Activated CD8-positive, alpha-beta memory T cell treated with anti-CD3 and anti-CD28 coated beads, Interleukin-2, amount 10 ng/mL, durations not matched to agents 7 days and 5 days (primary cell): ENCODE measurements at regions of chr12 and their contacts with region 1.

Region 1: GRCh38 chr12:104108755-104109445 is 29.1 kb downstream of the NFYB start:
- DNase-seq: peak; percentile 91
- ATAC-seq: peak; percentile 100
- H3K4me3 Mint-ChIP-seq: no peak overlapping the region
- H3K27ac Mint-ChIP-seq: peak overlapping the region; percentile 42
- H3K4me1 Mint-ChIP-seq: peaks cover 9% of the 10 kb centered on the region
- H3K27me3 Mint-ChIP-seq: no peaks in the 10 kb centered on the region

Region 2: GRCh38 chr12:103884316-103884715 is 224.6 kb before region 1 on chr12:
- CTCF ChIA-PET with region 1: interaction called, 11 read pairs
- DNase-seq: peak; percentile 60
- ATAC-seq: no peak
- H3K4me3 Mint-ChIP-seq: no peak overlapping the region
- H3K27ac Mint-ChIP-seq: no peak overlapping the region
- H3K4me1 Mint-ChIP-seq: peaks cover 22% of the 10 kb centered on the region
- H3K27me3 Mint-ChIP-seq: no peaks in the 10 kb centered on the region

Region 3: DNA sequence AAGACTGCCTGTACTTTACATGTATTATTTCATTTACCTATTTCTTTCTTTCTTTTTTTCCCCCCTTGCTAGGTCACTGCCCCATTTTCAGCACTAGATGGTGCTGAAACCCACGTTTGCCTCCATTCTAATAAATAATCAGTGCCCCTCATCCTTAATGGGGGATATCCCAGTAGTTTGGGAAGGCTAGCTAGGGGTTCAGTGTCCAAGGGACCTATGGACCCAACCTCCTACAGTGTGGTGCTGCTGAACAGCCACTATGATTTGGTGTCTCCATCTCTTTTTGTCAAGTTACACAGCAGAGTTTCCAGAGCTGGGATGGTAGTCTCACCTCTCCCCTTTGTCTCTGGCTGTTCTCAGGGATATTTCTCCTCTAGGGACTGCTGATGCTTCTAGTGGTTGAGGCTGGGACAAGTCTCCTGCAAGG is 51.1 kb before region 1 on chr12:
- CTCF ChIA-PET with region 1: interaction called, 55 read pairs
- DNase-seq: no peak
- ATAC-seq: peak; percentile 49
- H3K4me3 Mint-ChIP-seq: no peak overlapping the region
- H3K27ac Mint-ChIP-seq: no peak overlapping the region
- H3K4me1 Mint-ChIP-seq: peaks cover 3% of the 10 kb centered on the region
- H3K27me3 Mint-ChIP-seq: peaks cover 58% of the 10 kb centered on the region

Region 4: GRCh38 chr12:104083769-104084475 is 25.0 kb before region 1 on chr12:
- CTCF ChIA-PET with region 1: interaction called, 11 read pairs
- DNase-seq: peak; percentile 47
- ATAC-seq: peak; percentile 76
- H3K4me3 Mint-ChIP-seq: no peak overlapping the region
- H3K27ac Mint-ChIP-seq: peak overlapping the region; percentile 2
- H3K4me1 Mint-ChIP-seq: peaks cover 17% of the 10 kb centered on the region
- H3K27me3 Mint-ChIP-seq: no peaks in the 10 kb centered on the region

Region 5: GRCh38 chr12:104121001-104121400 is 12.1 kb after region 1 on chr12:
- CTCF ChIA-PET with region 1: interaction called, 21 read pairs
- DNase-seq: no peak
- ATAC-seq: no peak
- H3K4me3 Mint-ChIP-seq: no peak overlapping the region
- H3K27ac Mint-ChIP-seq: no peak overlapping the region
- H3K4me1 Mint-ChIP-seq: no peaks in the 10 kb centered on the region
- H3K27me3 Mint-ChIP-seq: no peaks in the 10 kb centered on the region